Activated CD4-positive, alpha-beta memory T cell treated with anti-CD3 and anti-CD28 coated beads for 36 hours (primary cell): ENCODE measurements at regions of chr19 and their contacts with region 1.

Region 1: DNA sequence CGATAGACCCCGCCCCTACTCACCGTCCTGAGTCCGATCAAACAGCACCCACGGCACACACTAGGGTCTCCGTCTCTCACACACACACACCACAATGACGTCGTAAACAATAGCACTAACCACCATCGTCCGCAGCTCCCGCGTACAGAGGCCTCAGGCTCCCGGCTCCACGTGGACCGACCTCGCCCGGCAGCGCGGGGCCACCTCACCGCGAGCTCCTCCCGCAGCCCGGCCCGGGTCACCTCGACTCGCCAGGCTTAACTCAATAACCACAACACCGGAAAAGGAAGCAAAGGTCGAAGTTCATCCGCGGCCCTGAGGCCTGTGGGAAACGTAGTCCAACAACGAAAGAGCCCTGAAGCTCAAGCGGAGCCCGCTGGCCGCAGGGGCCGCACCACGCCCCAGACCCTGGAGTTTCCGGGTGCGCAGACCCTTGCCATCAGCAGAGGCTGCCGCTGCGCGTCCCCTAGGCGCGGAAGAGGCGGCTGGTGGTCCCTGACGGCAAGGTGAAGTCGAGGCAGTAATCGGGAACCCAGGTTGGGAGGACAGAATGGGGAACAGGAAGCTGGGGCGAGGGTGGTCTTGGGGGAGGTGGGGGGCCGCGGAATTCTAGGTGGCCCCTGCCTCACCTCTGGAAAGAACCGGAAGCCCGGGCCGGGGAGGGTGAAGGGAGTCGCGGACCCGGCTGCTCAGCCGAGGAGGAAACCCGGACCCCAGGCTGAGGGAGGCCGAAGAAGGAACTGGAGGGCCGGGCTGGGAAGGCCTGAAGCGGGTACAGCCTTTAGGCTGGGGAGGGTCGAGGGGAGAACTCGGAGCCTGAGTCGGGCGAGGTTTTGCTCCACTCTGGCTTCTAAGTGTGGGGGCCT is at the start of gene ZNF529:
- DNase-seq: peak; percentile 92
- H3K4me3 Mint-ChIP-seq: peak within 1 kb of the TSS; percentile 87
- H3K27ac Mint-ChIP-seq: peak within 1 kb of the TSS; percentile 92
- H3K4me1 Mint-ChIP-seq: peaks cover 32% of the 10 kb centered on the region
- H3K27me3 Mint-ChIP-seq: no peaks in the 10 kb centered on the region
- total RNA-seq, gene ZNF529: 14.3 to 15.4 TPM

Region 2: DNA sequence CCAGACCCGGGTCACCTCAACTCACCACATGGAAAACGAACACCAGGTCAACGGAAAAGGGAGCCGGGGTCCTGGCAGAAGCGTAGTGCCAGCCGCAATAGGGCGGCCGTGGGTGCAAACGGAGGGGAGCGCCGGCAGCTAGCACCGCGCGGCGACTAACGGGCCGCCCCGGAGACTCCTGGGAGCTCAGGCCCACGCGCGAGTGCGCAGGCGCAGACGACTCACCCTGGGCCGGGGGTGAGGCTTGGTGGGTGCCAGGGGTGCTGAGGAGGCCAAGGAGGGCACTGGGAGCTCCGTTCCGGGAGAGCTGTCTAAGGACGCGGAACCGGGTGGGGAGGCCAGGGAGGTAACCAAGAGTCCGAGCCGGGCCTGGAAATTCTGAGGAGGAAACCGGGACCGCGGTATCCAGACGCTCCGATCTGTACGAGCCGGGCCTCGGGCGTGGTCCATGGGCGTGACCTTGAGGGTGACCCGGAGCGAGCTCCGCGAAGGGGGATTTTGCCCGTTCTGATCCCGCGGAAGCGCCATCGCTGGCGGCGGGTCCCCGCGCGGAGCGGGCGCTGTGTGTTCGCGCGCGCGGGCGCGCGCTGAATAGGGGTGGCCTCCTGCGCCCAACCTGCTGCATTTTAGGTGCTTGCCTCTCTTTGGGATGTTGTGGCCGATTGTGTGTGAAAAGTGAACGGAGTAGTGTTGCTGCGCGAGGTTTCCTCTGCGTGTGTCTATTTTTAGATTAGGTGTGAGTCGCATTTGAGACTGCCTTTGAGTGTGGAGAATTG is 32.0 kb after region 1 on chr19 and contains the start of gene ZNF382:
- CTCF ChIA-PET with region 1: no interaction called
- POLR2A ChIA-PET with region 1: interaction called, 20 read pairs
- intact Hi-C with region 1: loop called (anchors 1 kb)
- DNase-seq: peak; percentile 90
- H3K4me3 Mint-ChIP-seq: peak within 1 kb of the TSS; percentile 92
- H3K27ac Mint-ChIP-seq: peak within 1 kb of the TSS; percentile 95
- H3K4me1 Mint-ChIP-seq: peaks cover 24% of the 10 kb centered on the region
- H3K27me3 Mint-ChIP-seq: no peaks in the 10 kb centered on the region
- total RNA-seq, gene ZNF382: 10.9 to 14.8 TPM

Region 3: GRCh38 chr19:36665832-36666231 is 92.6 kb after region 1 on chr19:
- CTCF ChIA-PET with region 1: no interaction called
- POLR2A ChIA-PET with region 1: no interaction called
- intact Hi-C with region 1: loop called (anchors 5 kb)
- DNase-seq: no peak
- H3K4me3 Mint-ChIP-seq: peak overlapping the region; percentile 94
- H3K27ac Mint-ChIP-seq: peak overlapping the region; percentile 61
- H3K4me1 Mint-ChIP-seq: peaks cover 28% of the 10 kb centered on the region
- H3K27me3 Mint-ChIP-seq: no peaks in the 10 kb centered on the region

Region 4: GRCh38 chr19:36796076-36796992 is 223.1 kb after region 1 on chr19:
- CTCF ChIA-PET with region 1: no interaction called
- POLR2A ChIA-PET with region 1: no interaction called
- intact Hi-C with region 1: no loop called
- DNase-seq: no peak
- H3K4me3 Mint-ChIP-seq: peak overlapping the region; percentile 80
- H3K27ac Mint-ChIP-seq: peak overlapping the region; percentile 89
- H3K4me1 Mint-ChIP-seq: peaks cover 11% of the 10 kb centered on the region
- H3K27me3 Mint-ChIP-seq: peaks cover 5% of the 10 kb centered on the region